AG04450 (cell line): ENCODE measurements at regions of chr17 and their contacts with region 1.

Region 1: DNA sequence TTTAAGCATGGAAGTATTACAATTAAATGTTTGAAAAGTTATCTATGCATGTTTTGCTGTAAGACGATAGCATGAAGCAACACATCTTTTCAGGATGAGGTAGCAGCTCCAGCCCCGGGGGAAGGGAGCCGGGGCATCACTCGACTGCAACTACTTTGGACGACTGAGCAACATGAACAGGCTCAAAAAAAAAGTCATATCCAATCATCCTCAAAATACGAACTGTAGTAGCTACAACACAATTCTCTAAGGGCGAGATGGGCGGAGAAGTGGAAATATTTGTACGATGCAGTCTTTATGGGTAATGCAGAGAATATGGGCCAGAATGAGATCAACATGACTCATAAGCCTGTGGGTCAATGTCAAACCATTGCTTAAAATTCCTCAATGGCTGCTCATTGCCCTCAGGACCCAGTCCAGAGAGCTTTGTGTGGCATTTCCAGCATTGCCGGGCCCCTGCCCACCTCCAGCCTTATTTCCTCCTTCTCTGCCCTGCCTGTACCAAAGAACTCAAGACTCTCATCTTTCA is 17.6 kb upstream of the SMURF2 start:
- DNase-seq: peak; percentile 97
- H3K4me3 ChIP-seq: peak overlapping the region; percentile 48
- H3K27ac ChIP-seq: peak overlapping the region; percentile 98
- H3K27me3 ChIP-seq: no peaks in the 10 kb centered on the region
- CTCF ChIP-seq: no peak

Region 2: DNA sequence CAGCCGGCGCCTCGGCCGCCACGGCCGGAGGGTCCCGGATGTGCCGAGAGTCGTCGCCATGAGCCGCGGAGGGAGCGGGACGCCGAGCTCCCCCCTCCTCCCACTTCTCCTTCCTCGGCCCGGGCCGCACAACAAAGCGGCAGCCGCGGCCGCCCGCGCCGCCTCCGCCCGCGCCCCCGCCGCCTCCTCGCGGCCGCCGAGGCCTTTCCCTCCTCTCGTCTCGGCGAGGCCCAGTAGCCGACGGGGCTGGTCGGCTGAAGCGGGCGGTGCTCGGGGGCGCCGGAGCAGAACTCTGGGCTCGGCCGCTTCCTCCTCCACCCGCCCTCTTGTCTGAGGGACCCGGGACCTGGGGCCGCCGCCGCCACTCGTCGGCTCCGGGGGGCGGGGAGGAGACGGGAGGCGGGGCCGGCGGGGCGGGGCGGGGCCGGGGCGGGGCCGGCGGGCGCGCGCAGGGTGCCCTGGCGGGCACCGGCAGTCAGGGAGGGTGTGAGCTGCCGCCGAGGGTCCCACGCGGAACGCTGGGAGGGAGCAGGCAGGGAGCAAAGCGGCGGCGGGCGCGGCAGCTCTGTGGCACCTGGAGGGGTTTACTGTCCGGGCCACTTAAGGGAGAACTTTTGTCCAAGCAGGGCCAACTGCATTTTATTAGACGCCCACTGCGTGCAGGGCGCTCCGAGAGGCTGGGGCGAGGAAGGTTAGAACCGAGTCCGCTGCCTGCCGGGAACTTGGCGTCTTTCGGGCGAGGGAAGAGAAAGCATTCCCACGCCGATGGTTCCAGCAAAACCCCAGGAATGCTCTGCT is 17.6 kb before region 1 on chr17 and contains the start of gene SMURF2:
- CTCF ChIA-PET with region 1: interaction called, 3 read pairs
- POLR2A ChIA-PET with region 1: interaction called, 19 read pairs
- DNase-seq: no peak
- H3K4me3 ChIP-seq: peak within 1 kb of the TSS; percentile 85
- H3K27ac ChIP-seq: peak within 1 kb of the TSS; percentile 65
- H3K27me3 ChIP-seq: no peaks in the 10 kb centered on the region
- CTCF ChIP-seq: no peak
- polyA plus RNA-seq, gene SMURF2: 130 and 147 TPM in 2 replicates